Naive thymus-derived CD4-positive, alpha-beta T cell (primary cell): ENCODE measurements at regions of chr19 and their contacts with region 1.

Region 1: GRCh38 chr19:15297416-15298224 is 34.7 kb downstream of the BRD4 start:
- DNase-seq: peak in 7 of 9 donors; percentile 40 to 54 (median 46)
- ATAC-seq: peak; percentile 63
- H3K4me3 ChIP-seq: peak overlapping the region; percentile 2
- H3K4me3 Mint-ChIP-seq: peak overlapping the region; percentile 69 to 79 (median 74)
- H3K27ac ChIP-seq: peak overlapping the region; percentile 46
- H3K27ac Mint-ChIP-seq: peak overlapping the region; percentile 15 to 91 (median 68)
- H3K4me1 ChIP-seq: peaks cover 71 to 86% of the 10 kb centered on the region in 2 donors
- H3K4me1 Mint-ChIP-seq: peaks cover 57 to 95% (median 93%) of the 10 kb centered on the region in 7 donors
- H3K27me3 ChIP-seq: no peaks in the 10 kb centered on the region
- H3K27me3 Mint-ChIP-seq: no peaks in the 10 kb centered on the region

Region 2: DNA sequence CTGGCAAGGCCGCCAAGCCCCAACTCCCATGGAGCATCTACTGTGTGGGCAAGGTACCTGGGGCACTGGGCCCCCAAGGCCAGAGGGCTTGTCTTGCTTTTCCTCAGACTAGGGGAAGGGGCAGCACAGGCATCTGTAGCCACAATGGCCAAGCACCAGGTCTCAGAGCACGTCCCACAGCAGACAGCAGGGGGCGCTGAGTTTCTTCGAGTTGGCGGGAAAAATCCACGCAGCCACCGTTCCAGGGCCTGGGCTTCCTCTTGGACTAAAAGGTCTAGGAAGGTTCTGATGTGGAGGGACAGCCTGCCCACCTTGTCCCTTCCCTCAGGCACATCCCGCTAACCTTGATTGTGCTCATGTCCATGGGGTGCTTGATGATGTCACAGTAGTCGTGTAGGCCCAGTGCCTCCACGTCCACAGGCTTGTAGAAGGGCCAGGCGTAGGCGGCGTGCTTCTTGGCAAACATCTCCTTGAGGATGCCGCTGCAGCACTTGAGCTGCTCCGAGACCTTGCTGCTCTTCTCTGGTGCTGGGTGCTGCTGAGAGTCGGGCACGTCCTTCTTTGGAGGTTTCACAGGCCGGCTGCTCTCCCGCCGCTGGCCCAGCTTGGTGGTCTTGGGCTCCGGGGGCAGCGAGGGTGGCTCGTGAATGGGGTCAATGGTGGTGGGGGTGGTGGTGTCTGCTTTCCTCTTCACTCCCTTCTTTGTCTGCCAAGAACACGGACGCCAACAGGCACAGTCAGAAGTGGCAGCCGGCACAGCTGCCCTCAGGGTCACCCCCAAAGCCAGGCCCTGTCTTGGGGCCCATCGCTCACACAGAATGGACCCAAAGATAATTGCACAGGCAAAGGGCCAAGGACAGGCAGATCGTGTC is 33.3 kb before region 1 on chr19:
- CTCF ChIA-PET with region 1: no interaction called
- POLR2A ChIA-PET with region 1: no interaction called
- intact Hi-C with region 1: no loop called
- DNase-seq: peak; percentile 54 to 77 (median 65)
- ATAC-seq: peak; percentile 79
- H3K4me3 ChIP-seq: no peak overlapping the region
- H3K4me3 Mint-ChIP-seq: no peak overlapping the region
- H3K27ac ChIP-seq: no peak overlapping the region
- H3K27ac Mint-ChIP-seq: peak overlapping the region in 2 of 9 donors; percentile 14 to 38
- H3K4me1 ChIP-seq: no peaks in the 10 kb centered on the region
- H3K4me1 Mint-ChIP-seq: peaks cover 7 to 19% (median 11%) of the 10 kb centered on the region in 7 donors
- H3K27me3 ChIP-seq: no peaks in the 10 kb centered on the region
- H3K27me3 Mint-ChIP-seq: no peaks in the 10 kb centered on the region

Region 3: DNA sequence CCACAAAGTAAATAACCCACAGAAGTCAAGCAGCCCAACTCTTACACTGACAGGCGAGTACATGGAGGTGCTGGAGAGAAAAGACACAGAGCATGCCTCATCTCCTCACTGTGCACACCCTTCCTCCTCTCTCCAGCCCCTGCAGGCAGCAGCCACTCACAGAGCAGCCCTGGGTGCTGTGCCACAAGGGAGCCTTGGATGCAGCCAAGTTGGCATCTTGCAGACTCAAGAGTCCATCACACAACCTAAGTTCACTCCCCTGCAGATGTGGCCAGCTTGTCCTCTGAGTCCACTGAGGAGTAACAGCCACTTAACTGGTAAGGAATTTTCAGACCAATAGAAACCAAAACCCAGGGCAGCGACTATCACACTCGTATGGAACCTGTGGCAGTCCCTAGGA is 12.7 kb before region 1 on chr19:
- CTCF ChIA-PET with region 1: interaction called, 3 read pairs
- POLR2A ChIA-PET with region 1: interaction called, 5 read pairs
- intact Hi-C with region 1: loop called in 1 of 2 experiments (anchors 1 kb)
- DNase-seq: no peak
- ATAC-seq: no peak
- H3K4me3 ChIP-seq: no peak overlapping the region
- H3K4me3 Mint-ChIP-seq: peak overlapping the region in 9 of 10 donors; percentile 53 to 82 (median 71)
- H3K27ac ChIP-seq: peak overlapping the region; percentile 50
- H3K27ac Mint-ChIP-seq: peak overlapping the region; percentile 30 to 93 (median 82)
- H3K4me1 ChIP-seq: peaks cover 82 to 92% of the 10 kb centered on the region in 2 donors
- H3K4me1 Mint-ChIP-seq: peaks cover 84 to 100% (median 98%) of the 10 kb centered on the region in 7 donors
- H3K27me3 ChIP-seq: no peaks in the 10 kb centered on the region
- H3K27me3 Mint-ChIP-seq: no peaks in the 10 kb centered on the region